Posterior cingulate gyrus (tissue), 11 donors: ENCODE measurements at regions of chr3 and their contacts with region 1.

Region 1: GRCh38 chr3:152524198-152525140 is 255.7 kb downstream of the MBNL1 start:
- DNase-seq: peak in 1 of 10 donors; percentile 31

Region 2: GRCh38 chr3:152071924-152072323 is 452.5 kb before region 1 on chr3:
- intact Hi-C with region 1: loop called (anchors 10 kb)
- DNase-seq: no peak

Region 3: GRCh38 chr3:152695840-152696239 is 171.4 kb after region 1 on chr3:
- intact Hi-C with region 1: loop called (anchors 5 kb)
- DNase-seq: no peak